ENCODE measurements at regions of chr2 and their contacts with region 1.

Region 1: DNA sequence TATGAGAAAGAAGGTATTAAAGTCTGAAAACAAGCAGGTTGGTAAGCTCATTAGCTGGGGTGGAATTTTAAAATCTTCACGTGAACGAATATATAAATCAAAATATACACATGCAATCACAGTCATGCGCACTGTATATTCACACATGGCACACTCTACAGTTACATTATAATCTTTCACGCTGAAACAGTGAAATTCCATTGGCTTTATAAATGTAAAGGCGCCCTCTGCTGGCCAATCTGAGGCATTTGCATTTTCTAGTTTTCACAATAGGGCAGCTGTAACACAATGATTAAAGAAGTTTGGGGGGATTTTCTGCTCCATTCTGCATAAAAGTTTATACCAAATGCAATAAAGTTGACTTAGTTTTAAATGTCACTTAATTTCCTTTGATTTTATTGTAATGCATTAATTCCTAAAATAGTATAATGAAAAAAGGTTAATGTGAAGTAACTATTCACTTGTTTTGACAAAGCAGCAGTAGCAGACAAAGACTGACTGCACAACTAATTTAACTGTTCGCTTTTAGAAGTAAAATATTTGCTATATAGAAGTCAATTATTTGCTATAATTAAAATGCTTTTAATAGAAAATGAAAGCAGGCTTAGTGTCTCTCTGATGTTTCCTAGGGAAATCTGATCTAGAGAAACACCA is 17.2 kb downstream of the IFIH1 start:
- DNase-seq: peak; percentile 63
- H3K4me3 ChIP-seq: no peak overlapping the region
- H3K27ac ChIP-seq: no peak overlapping the region
- H3K4me1 ChIP-seq: no peaks in the 10 kb centered on the region
- H3K27me3 ChIP-seq: no peaks in the 10 kb centered on the region
- CTCF ChIP-seq: peak; percentile 62 to 64
- POLR2A ChIP-seq: no peak

Region 2: DNA sequence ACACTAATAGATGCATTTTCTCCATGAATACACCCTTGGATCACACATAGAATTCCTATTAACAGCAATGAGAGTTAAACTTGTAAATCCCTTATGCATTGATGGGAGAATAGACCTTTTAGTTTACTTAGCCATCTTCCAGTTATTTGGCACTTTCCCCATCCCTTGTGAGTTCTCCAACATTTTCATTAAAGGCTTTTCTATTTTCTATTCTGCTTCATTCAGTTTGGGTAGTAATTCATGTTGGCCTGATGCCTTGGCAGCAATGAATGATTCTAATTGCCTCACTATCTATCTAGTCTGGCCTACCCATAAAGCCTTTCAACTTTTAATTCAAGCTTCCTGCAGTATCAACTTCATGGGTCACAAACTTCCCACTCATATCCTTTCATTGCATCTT is 852.8 kb before region 1 on chr2:
- CTCF ChIA-PET with region 1: no interaction called
- POLR2A ChIA-PET with region 1: no interaction called
- dilution Hi-C with region 1: no loop called
- intact Hi-C with region 1: no loop called
- DNase-seq: no peak
- H3K4me3 ChIP-seq: no peak overlapping the region
- H3K27ac ChIP-seq: no peak overlapping the region
- H3K4me1 ChIP-seq: no peaks in the 10 kb centered on the region
- H3K27me3 ChIP-seq: peaks cover 3 to 4% of the 10 kb centered on the region in 2 experiments
- CTCF ChIP-seq: no peak
- POLR2A ChIP-seq: no peak

Region 3: GRCh38 chr2:161586517-161587167 is 714.6 kb before region 1 on chr2:
- CTCF ChIA-PET with region 1: interaction called, 45 read pairs
- POLR2A ChIA-PET with region 1: no interaction called
- dilution Hi-C with region 1: no loop called
- intact Hi-C with region 1: loop called (anchors 1 kb)
- DNase-seq: peak; percentile 42
- H3K4me3 ChIP-seq: no peak overlapping the region
- H3K27ac ChIP-seq: no peak overlapping the region
- H3K4me1 ChIP-seq: no peaks in the 10 kb centered on the region
- H3K27me3 ChIP-seq: no peaks in the 10 kb centered on the region
- CTCF ChIP-seq: peak; percentile 47
- POLR2A ChIP-seq: no peak

Region 4: GRCh38 chr2:162007447-162008040 is 293.7 kb before region 1 on chr2:
- CTCF ChIA-PET with region 1: interaction called, 11 read pairs
- POLR2A ChIA-PET with region 1: no interaction called
- dilution Hi-C with region 1: no loop called
- intact Hi-C with region 1: loop called (anchors 5 kb)
- DNase-seq: peak; percentile 38
- H3K4me3 ChIP-seq: no peak overlapping the region
- H3K27ac ChIP-seq: no peak overlapping the region
- H3K4me1 ChIP-seq: no peaks in the 10 kb centered on the region
- H3K27me3 ChIP-seq: no peaks in the 10 kb centered on the region
- CTCF ChIP-seq: peak; percentile 21 to 29
- POLR2A ChIP-seq: no peak

Region 5: DNA sequence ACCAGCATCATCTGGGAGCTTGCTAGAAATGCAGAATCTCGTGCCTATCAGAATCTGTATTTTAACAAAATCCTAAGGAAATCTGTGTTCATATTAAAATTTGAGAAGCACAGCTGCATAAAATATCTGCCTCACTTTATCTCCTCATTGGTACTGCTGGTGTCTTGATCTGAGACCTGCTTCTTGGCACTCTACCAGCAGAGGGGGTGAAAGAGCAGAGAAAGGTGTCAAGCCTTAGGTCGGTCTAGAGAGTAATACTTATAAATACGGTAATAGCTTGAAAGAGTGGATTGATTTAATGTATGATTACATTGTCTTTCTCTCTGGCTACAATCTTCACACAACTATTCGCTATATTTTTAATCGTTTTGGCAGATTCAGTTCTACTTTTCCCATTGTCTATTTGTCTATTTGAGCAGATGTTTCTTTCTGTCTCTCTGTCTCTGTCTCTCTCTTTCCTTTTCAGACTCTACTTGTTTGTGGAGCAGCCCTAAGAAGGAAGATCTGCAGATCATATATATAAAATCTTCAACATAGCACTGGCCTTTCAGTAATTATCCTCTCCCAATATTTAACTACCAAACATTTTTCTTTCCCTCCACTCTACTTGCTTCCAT is 147.6 kb before region 1 on chr2:
- CTCF ChIA-PET with region 1: interaction called, 101 read pairs
- POLR2A ChIA-PET with region 1: no interaction called
- dilution Hi-C with region 1: no loop called
- intact Hi-C with region 1: loop called (anchors 1 kb)
- DNase-seq: peak; percentile 66
- H3K4me3 ChIP-seq: no peak overlapping the region
- H3K27ac ChIP-seq: no peak overlapping the region
- H3K4me1 ChIP-seq: peaks cover 3% of the 10 kb centered on the region
- H3K27me3 ChIP-seq: peaks cover 1 to 20% of the 10 kb centered on the region in 2 experiments
- CTCF ChIP-seq: peak; percentile 59 to 69
- POLR2A ChIP-seq: no peak

Region 6: DNA sequence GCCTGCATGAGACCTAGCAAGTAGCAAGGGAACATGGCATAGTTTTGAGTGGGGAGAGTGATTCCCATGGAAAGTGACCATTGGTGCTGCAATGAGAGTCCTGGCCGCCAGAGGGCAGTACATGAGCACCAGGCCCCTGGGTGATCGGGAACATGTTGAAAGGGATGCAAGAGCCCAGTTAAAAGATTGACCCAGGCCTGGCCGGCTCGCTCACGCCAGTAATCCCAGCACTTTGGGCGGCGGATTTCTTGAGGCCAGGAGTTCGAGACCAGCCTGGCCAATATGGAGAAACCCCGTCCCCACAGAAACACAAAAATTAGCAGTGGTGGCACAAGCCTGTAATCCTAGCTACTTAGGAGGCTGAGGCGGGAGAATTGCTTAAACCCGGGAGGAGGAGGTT is 80.2 kb before region 1 on chr2:
- CTCF ChIA-PET with region 1: interaction called, 1,052 read pairs
- POLR2A ChIA-PET with region 1: interaction called, 3 read pairs
- dilution Hi-C with region 1: no loop called
- intact Hi-C with region 1: loop called (anchors 1 kb)
- DNase-seq: peak; percentile 71
- H3K4me3 ChIP-seq: no peak overlapping the region
- H3K27ac ChIP-seq: no peak overlapping the region
- H3K4me1 ChIP-seq: no peaks in the 10 kb centered on the region
- H3K27me3 ChIP-seq: no peaks in the 10 kb centered on the region
- CTCF ChIP-seq: peak; percentile 88 to 92
- POLR2A ChIP-seq: no peak

Region 7: DNA sequence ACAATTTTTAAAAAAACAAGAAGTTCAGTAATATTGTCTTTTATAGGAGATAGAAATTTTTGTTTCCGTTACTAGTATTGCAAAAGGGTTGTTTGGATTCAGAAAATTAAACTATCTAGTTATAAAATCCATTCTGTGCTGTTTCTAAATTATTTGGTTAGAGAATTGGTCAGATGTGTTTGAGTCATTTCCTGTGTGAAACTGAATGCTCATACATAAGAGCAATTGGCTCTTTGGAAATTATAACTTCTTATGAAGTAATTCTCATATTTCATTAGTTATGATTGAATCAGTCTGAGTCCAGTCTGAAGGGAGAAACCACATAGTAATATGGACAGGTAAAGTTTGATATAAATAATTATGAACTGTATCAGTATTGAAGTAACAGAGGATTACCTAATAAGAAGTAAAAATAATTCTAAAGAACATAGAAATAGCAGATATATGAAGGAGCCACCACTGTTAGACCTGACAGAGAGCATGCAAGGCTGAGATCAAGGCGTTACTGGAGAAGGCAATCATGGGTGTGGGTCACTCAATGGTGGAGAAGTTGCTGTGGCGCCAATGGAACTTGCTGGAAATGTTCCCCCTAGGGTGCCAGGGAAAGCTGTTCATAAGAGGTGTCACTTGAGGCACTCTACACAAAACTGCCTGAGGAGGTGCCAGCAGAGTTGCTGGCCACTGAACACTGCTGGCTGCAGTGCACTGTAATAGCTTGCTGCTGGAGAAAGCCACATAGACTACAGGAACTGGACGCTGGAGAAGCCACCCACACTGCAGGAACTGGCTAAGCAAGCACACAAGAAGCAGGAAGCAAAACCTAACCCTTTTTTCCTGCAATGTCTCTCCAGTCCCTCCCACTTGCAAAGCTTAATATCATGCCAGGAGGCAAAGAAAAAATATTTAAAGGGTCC is 40.0 kb before region 1 on chr2:
- CTCF ChIA-PET with region 1: interaction called, 11 read pairs
- POLR2A ChIA-PET with region 1: no interaction called
- dilution Hi-C with region 1: no loop called
- intact Hi-C with region 1: no loop called
- DNase-seq: peak; percentile 57
- H3K4me3 ChIP-seq: no peak overlapping the region
- H3K27ac ChIP-seq: no peak overlapping the region
- H3K4me1 ChIP-seq: peaks cover 14% of the 10 kb centered on the region
- H3K27me3 ChIP-seq: no peaks in the 10 kb centered on the region
- CTCF ChIP-seq: no peak
- POLR2A ChIP-seq: no peak

Region 8: DNA sequence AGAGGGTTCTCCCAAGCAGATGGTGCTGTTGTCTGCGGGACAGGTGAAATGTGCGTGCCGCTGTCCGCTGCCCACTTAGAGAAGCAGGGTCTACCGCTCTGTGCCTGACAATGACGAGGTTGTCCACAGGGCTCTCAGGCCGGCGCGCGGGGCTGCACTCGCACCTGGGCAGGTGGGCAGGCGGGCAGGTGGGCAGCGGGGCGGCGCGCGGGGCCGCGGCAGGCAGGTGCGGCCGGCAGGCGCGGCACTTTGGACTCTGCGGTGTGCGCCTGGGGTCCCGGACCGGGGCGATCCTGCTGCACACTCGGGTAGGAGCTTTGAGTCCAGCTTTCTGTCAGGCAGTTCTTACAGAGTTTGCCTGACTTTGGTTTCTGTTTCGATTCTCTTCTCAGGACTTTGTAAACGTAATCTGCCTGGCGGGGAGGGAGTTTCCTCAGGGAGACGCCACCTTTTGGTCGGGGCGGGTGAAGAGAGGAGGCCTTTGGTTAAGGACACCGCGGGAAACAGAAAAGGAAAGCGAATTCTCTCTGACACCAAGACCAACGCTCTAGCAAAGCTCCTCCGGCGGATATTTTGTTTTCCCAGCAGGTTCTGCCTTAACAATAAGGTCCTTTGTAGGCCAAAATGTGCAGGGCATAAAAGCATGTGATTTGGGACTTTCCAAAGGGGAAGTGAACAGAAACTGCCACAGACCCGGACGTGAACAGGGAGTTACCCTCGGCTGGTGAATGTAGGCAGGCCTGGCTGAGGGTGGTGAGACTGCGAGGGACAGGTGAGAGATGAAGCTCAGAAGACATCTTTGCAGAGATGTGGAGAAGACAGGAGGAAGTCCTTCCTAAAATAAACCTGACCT is 17.3 kb after region 1 on chr2 and contains the start of gene IFIH1:
- CTCF ChIA-PET with region 1: interaction called, 23 read pairs
- POLR2A ChIA-PET with region 1: no interaction called
- dilution Hi-C with region 1: no loop called
- intact Hi-C with region 1: no loop called
- DNase-seq: peak; percentile 88
- H3K4me3 ChIP-seq: peak within 1 kb of the TSS; percentile 56 to 66 (median 59)
- H3K27ac ChIP-seq: peak within 1 kb of the TSS; percentile 43
- H3K4me1 ChIP-seq: peaks cover 8% of the 10 kb centered on the region
- H3K27me3 ChIP-seq: no peaks in the 10 kb centered on the region
- CTCF ChIP-seq: peak; percentile 22 to 48
- POLR2A ChIP-seq: no peak
- total RNA-seq, gene IFIH1: 4.7 and 6.9 TPM in 2 replicates

Measured in endothelial cell of umbilical vein (primary cell).